Mammary epithelial cell (primary cell): ENCODE measurements at regions of chr14 and their contacts with region 1.

Region 1: GRCh38 chr14:93086441-93087055 is 29.2 kb downstream of the ITPK1 start:
- DNase-seq: no peak
- H3K4me3 ChIP-seq: no peak overlapping the region
- H3K27ac ChIP-seq: peak overlapping the region; percentile 80
- H3K4me1 ChIP-seq: peaks cover 42% of the 10 kb centered on the region
- H3K27me3 ChIP-seq: no peaks in the 10 kb centered on the region
- CTCF ChIP-seq: no peak

Region 2: DNA sequence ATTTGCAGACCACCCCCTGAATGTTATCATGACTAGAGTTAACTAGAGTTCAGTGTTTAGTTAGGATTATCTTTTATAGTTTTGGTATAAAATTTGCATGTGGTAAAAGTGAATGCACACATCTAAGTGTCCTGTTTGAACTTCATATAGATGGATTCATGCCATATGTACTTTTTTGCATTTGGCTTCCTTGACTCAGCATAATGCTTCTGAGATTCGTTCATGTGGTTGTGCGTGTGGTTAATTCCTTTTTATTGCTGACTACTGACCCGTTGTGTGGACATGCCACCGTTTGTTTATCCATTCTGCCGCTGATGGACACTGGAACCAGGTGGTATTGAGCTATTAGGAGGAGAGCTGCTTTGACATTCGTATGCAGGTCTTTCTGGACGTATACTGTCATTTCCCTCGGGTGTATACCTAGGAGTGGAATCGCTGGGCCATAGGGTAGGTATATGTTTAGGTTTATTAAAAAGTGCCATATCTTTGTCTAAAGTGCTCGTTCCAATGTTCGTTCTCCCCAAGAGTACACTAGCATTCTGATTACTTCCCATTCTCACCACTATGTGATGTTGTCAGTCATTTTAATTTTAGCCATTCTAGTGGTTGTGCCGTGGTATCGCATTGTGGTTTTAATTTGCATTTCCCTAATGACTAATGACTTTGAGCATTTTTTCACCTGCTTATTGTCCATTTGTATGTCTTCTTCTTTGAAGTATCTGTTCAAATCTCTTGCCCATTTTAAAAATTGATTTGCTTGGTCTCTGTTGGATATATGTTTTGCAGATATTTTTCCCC is 535.3 kb before region 1 on chr14:
- CTCF ChIA-PET with region 1: no interaction called
- dilution Hi-C with region 1: no loop called
- in situ Hi-C with region 1: no loop called
- intact Hi-C with region 1: no loop called
- DNase-seq: no peak
- H3K4me3 ChIP-seq: no peak overlapping the region
- H3K27ac ChIP-seq: no peak overlapping the region
- H3K4me1 ChIP-seq: no peaks in the 10 kb centered on the region
- H3K27me3 ChIP-seq: no peaks in the 10 kb centered on the region
- CTCF ChIP-seq: no peak

Region 3: GRCh38 chr14:92997343-92998061 is 89.0 kb before region 1 on chr14:
- CTCF ChIA-PET with region 1: no interaction called
- dilution Hi-C with region 1: loop called (anchors 5 kb)
- in situ Hi-C with region 1: no loop called
- intact Hi-C with region 1: no loop called
- DNase-seq: no peak
- H3K4me3 ChIP-seq: no peak overlapping the region
- H3K27ac ChIP-seq: no peak overlapping the region
- H3K4me1 ChIP-seq: peaks cover 5% of the 10 kb centered on the region
- H3K27me3 ChIP-seq: no peaks in the 10 kb centered on the region
- CTCF ChIP-seq: no peak

Region 4: GRCh38 chr14:93023039-93023438 is 63.5 kb before region 1 on chr14:
- CTCF ChIA-PET with region 1: no interaction called
- dilution Hi-C with region 1: loop called (anchors 5 kb)
- in situ Hi-C with region 1: no loop called
- intact Hi-C with region 1: no loop called
- DNase-seq: no peak
- H3K4me3 ChIP-seq: no peak overlapping the region
- H3K27ac ChIP-seq: no peak overlapping the region
- H3K4me1 ChIP-seq: no peaks in the 10 kb centered on the region
- H3K27me3 ChIP-seq: no peaks in the 10 kb centered on the region
- CTCF ChIP-seq: no peak

Region 5: DNA sequence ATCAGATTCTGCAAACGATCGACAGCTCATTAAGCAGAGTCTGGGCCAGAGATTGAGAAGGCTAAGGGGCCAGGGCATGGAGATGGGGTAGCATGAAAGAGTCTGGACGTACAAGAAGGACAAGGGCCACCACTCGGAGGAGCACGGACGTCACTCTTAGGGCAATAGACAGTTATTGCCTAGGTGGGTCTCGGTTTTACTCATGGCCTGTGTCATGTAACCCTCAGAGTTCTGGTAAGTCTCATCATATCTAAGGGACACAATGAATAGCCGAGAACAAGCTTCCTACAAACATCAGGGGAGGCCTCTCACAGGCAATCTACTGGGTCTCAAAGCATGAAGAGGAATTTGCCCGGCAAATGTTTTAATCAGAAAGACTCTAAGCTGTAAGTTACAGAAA is 59.6 kb after region 1 on chr14:
- CTCF ChIA-PET with region 1: no interaction called
- dilution Hi-C with region 1: loop called (anchors 5 kb)
- in situ Hi-C with region 1: no loop called
- intact Hi-C with region 1: no loop called
- DNase-seq: no peak
- H3K4me3 ChIP-seq: no peak overlapping the region
- H3K27ac ChIP-seq: no peak overlapping the region
- H3K4me1 ChIP-seq: peaks cover 12% of the 10 kb centered on the region
- H3K27me3 ChIP-seq: no peaks in the 10 kb centered on the region
- CTCF ChIP-seq: no peak